ENCODE measurements at regions of chr14 and their contacts with region 1.

Region 1: DNA sequence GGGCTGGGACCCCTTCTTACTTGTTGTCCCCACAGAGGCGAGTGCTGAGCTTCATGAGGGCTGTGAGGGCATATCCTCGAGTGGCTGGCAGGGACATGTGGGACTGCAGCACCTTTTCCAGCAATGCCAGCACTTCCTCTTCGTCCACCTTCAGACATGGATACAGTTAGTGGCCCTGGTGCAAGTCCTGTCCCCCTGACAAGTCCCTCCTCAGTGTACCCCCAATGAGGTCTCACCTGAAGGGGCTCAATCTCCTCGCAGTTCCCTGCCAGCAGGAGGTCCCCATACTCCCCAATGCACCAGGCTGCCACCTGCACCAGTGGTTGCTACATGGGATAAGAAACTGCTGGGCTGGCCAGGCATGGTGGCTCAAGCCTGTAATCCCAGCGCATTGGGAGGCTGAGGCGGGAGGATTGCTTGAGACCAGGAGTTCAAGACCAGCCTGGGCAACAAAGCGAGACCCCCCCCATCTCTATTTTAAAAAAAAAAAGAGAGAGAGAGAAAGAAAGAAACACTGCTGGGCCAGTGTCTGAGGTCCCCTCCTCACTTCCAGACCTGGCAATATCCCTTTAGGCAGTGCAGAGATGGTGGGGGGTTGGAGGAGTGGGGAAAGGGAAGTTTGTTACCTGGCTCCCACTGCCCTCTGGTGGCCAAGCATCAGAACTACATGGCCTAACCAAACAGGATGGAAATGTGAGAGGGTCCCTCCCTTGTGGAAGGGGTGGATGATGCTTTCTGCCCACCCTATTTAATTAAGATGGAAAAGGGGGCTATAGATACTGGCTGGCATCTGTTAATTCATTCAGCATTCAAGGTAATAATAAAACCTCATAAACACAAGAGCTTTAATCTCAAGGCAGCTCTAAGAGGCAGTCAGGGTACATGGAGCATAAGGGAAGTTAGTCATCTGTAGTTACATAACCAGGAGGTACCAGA is 5.1 kb downstream of the AP1G2 start:
- DNase-seq: no peak

Region 2: DNA sequence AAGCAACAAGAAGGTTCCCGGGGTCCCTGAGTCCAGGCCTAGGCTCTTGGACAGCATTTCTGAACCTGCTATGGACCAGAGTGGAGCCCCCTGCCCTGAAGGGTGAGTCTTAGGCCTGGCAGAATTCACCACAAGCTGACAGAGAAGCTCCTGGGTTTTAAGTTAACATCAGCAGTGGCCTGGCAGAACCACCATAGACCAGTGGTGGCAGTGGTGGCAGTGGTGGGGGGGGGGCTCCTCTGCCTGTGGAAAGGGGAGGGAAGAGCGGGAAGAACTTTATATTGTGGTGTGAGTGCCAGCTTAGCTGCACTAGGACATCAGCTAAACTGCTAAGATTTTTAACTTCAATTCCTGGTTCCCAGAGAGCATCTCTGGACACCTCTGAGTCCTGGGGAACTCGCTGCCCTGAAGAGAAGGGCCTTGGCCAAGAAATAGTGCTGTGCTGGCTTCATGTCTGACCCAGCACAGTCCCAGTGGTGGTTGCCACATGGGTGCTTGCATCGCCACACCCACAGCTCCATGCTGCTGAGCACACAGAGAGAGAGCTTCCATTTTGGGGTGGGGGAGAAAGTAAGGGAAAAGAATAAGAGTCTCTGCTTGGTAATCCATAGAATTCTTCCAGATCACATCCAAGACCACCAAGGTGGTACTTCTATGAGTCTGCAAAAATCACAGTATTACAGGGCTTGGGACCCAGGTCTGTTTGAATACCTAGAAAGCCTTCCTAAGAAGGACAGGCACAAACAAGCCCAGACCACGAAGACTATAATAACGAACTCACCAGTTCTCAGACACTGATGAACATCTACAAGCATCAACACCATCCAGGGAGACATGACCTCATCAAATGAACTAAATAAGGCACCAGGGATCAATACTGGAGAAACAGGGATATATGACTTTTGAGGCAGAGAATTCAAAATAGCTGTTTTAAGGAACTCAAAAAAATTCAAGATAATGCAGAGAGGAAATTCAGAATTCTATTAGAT is 345.2 kb before region 1 on chr14:
- intact Hi-C with region 1: no loop called
- DNase-seq: no peak

Region 3: GRCh38 chr14:23457587-23458445 is 104.7 kb before region 1 on chr14:
- intact Hi-C with region 1: no loop called
- DNase-seq: no peak

Region 4: GRCh38 chr14:23478111-23478759 is 84.3 kb before region 1 on chr14:
- intact Hi-C with region 1: loop called (anchors 2 kb)
- DNase-seq: no peak

Region 5: GRCh38 chr14:24392325-24393091 is 830.0 kb after region 1 on chr14:
- intact Hi-C with region 1: no loop called
- DNase-seq: no peak